Calu3 (cell line): ENCODE measurements at regions of chr2 and their contacts with region 1.

Region 1: DNA sequence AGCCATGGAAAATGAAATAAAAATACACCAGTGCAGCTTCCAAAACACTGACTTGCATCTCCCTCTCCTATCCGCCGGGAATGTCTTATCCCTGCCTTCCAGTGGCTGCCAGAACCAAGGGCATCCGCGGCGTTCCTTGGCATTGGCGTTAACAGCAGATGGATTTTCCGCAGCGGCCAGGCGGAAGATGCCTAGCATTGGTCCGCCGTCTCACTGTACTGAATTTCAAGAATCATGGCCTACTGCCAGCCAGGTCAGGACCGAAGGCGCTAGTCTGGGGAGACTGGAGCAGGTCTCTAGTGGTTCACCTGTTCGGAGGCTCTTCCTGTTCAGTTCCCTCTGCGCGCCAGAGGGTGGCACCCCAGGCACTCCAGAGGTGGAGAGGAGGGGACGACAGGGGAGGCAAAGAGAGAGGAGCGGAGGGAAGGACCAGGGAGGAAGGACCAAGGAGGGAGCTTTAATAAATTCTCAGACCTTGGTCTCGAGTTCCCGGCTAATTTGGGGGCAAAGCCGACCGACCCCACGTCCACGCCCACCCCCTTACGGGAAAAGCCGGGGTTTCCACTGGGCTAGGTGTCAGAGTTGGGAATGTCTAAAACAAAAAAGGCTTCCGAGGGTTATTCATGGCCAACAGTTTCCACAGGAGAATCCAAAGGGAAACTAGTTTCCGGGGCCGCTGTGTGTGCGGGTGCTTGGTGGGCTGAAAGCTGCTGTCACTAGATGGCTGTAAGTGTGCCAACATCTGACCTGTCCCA is 3.7 kb upstream of the BCL2L11 start:
- DNase-seq: peak; percentile 83
- H3K4me3 Mint-ChIP-seq: peak overlapping the region; percentile 98
- H3K27ac Mint-ChIP-seq: peak overlapping the region; percentile 67
- H3K4me1 Mint-ChIP-seq: peaks cover 27% of the 10 kb centered on the region
- H3K27me3 Mint-ChIP-seq: peaks cover 39% of the 10 kb centered on the region
- CTCF ChIP-seq: peak; percentile 78

Region 2: DNA sequence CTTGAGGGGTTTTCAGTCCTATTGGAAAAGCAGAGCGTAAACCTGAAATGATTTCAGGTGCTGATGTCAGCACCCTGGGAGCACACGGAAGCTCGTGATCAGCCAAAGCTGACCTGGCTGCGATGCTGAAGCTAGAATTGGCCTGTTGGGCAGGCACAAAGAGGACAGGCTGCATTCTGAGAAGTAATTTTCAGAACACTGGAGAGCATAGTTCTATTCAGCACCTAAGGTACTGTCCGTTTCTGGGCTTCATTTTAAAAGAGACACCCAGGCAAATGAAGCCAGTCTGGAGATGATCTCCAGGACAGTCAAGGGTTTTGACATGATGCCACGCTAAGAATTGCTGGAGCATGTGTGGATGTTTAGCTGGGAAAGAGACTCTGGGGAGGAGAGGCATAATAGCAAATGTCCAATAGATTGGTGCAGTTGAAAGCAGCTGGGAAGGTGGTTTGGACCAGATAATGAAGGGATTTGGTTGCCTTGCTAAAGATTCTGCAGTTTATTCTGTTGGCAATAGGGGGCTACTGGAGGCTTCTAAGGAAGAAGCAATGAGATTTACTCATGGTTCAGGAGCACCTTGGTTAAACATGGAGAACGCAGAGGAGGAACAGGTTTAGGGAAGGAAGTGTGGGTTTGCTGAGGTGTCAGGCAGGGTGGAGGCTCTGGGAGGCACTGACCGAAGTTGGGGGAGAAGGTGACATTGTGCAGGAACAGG is 298.1 kb before region 1 on chr2:
- CTCF ChIA-PET with region 1: no interaction called
- intact Hi-C with region 1: loop called (anchors 10 kb)
- DNase-seq: no peak
- H3K4me3 Mint-ChIP-seq: no peak overlapping the region
- H3K27ac Mint-ChIP-seq: no peak overlapping the region
- H3K4me1 Mint-ChIP-seq: no peaks in the 10 kb centered on the region
- H3K27me3 Mint-ChIP-seq: peaks cover 60% of the 10 kb centered on the region
- CTCF ChIP-seq: no peak

Region 3: DNA sequence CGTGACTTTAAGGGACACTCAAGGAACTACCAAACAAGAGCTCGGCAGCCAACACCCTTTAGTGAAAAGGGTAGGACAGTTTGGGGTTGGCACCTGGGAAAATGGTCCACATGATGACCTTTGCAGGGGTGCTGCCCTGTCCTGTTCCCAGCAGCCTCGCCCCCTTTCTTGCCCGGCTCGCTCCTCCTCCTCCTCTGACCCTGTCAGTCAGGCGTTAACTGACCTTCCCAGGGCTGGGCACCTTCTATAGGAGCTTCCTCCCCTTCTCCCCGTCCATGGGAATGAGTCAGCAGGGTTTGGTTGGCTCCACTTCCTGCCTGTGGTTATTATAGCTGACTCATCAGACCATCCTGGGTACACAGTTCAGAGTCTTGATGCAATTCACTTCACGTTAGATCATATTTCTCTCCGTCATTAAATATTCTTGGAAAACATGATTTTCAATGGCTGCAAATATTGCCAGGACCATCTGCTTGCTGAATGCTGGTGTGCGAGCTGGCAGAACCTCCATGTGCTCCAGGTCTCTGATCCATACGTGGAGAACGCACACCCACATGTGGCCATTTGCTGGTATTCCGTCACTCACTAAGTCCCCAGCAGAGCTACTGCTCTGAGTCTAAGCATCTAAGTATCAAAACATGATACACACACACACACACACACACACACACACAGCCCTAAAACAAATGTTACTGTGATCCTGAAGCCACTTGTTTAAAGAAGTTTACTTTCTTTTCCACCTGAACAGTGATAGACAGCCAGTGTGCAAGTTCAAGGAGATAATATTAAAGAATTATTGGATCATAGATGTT is 581.9 kb after region 1 on chr2:
- CTCF ChIA-PET with region 1: no interaction called
- intact Hi-C with region 1: loop called (anchors 5 kb)
- DNase-seq: peak; percentile 85
- H3K4me3 Mint-ChIP-seq: peak overlapping the region; percentile 54
- H3K27ac Mint-ChIP-seq: peak overlapping the region; percentile 95
- H3K4me1 Mint-ChIP-seq: peaks cover 45% of the 10 kb centered on the region
- H3K27me3 Mint-ChIP-seq: no peaks in the 10 kb centered on the region
- CTCF ChIP-seq: no peak